ENCODE measurements at regions of chr19 and their contacts with region 1.

Region 1: GRCh38 chr19:7293795-7294570 is at the start of gene INSR:
- DNase-seq: peak; percentile 84
- ATAC-seq: peak; percentile 99
- H3K4me3 ChIP-seq: peak within 1 kb of the TSS; percentile 59
- H3K27ac ChIP-seq: peak within 1 kb of the TSS; percentile 49; the same call in 1 of the 2 replicates
- H3K4me1 ChIP-seq: peaks cover 3% of the 10 kb centered on the region; the same call in 1 of the 2 replicates
- H3K27me3 ChIP-seq: no peaks in the 10 kb centered on the region; the same call in 1 of the 2 replicates
- CTCF ChIP-seq: no peak
- POLR2A ChIP-seq: no peak
- RAD21 ChIP-seq: no peak
- total RNA-seq, gene INSR: 7.9 and 8.3 TPM in 2 replicates

Region 2: DNA sequence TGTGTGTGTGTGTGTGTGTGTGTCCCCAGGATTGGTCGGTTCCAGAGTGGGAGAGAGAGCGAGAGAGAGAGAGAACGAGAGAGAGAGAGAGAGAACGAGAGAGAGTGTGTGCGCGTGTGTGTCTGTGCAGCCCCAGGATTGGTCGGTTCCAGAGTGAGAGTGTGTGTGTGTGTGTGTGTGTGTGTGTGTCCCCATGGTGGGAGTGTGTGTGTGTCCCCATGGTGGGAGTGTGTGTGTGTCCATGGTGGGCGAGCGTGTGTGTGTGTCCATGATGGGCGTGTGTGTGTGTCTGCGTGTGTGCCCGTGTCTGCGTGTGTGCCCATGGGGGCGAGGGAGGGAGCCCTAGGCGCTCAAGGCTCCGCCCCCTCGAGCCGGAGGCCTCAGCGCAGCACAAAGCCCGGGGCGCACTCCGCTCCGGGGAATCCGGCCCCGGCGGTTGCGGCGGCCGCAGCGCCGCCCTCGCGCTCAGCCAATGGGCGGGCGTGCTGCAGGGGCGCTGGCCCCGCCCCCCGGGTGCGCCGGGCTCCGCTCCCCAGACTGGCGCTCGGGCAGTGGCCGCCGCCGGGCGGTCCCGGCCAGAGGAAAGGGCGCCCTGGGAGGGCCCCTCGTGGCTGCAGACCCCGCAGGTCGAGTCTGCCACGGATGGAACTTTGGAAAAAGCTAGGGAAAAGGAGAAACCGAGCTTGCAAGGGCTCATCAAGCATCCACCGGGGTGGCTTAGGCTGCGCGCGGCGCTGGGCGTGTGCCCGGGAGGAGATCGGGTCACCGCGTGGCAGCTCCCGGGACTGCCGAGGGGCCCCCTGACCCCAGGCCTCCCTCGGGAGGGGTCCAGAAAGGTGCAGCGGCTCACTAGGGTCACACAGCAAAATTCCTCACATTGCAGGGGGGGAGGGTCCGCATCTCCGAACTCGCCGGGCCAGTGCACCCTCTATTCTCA is 96.0 kb before region 1 on chr19:
- CTCF ChIA-PET with region 1: no interaction called
- POLR2A ChIA-PET with region 1: no interaction called
- dilution Hi-C with region 1: no loop called
- in situ Hi-C with region 1: loop called (anchors 5 kb)
- intact Hi-C with region 1: loop called (anchors 1 kb)
- DNase-seq: peak; percentile 94
- ATAC-seq: peak; percentile 94
- H3K4me3 ChIP-seq: peak overlapping the region; percentile 85
- H3K27ac ChIP-seq: peak overlapping the region; percentile 78
- H3K4me1 ChIP-seq: no peaks in the 10 kb centered on the region
- H3K27me3 ChIP-seq: no peaks in the 10 kb centered on the region
- CTCF ChIP-seq: 0 out of 2 replicates have a peak, but pooled peaks have one; percentile 0
- POLR2A ChIP-seq: peak; percentile 54; the same call in 1 of the 2 replicates
- RAD21 ChIP-seq: no peak

Region 3: DNA sequence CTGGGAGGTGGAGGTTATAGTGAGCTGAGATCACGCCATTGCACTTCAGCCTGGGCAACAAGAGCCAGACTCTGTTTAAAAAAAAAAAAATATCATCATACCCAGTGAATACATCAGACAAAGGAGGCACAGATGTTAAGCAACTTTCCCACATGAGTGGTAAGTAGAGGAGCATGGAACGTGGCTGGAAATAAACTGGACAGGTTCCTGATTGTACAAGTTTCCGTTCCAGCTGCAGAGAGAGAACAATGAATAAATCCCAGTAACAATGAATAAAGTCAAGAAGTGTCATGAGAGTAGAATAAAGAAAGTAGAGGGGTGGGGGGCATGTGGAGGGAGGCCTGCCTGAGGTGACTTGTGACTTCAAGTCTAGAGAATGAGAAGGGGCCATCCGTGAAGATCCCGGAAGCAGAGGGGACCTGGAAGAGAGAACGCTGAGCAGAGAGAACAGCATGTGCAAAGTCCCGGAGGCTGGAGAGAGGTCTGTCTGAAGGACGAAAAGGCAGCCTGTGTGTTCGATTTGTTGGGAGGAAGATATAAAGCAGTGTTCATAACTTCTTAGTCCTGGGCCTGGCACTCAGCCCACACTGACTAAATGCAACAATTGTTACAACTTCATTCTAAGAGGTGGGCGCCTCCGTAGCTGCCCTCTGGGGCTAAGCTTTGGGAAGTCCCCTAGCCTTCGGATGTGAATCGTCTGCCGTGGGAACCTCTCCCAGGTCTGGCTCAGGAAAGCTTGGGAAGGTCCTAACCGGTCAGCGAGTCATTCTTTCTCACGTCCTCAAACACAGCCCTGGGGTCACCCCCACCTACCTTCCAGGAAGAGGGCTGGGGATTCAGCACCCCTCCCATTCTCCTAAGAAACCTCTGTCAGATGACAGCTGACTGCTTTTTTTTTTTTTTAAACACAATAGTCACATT is 39.5 kb after region 1 on chr19:
- CTCF ChIA-PET with region 1: no interaction called
- POLR2A ChIA-PET with region 1: no interaction called
- dilution Hi-C with region 1: no loop called
- in situ Hi-C with region 1: no loop called
- intact Hi-C with region 1: no loop called
- DNase-seq: no peak
- ATAC-seq: no peak
- H3K4me3 ChIP-seq: no peak overlapping the region
- H3K27ac ChIP-seq: no peak overlapping the region
- H3K4me1 ChIP-seq: no peaks in the 10 kb centered on the region
- H3K27me3 ChIP-seq: peaks cover 3% of the 10 kb centered on the region; the same call in 1 of the 2 replicates
- CTCF ChIP-seq: no peak
- POLR2A ChIP-seq: no peak
- RAD21 ChIP-seq: no peak

Region 4: GRCh38 chr19:7386308-7386707 is 92.3 kb after region 1 on chr19:
- CTCF ChIA-PET with region 1: no interaction called
- POLR2A ChIA-PET with region 1: no interaction called
- dilution Hi-C with region 1: no loop called
- in situ Hi-C with region 1: no loop called
- intact Hi-C with region 1: no loop called
- DNase-seq: no peak
- ATAC-seq: no peak
- H3K4me3 ChIP-seq: no peak overlapping the region
- H3K27ac ChIP-seq: no peak overlapping the region
- H3K4me1 ChIP-seq: no peaks in the 10 kb centered on the region
- H3K27me3 ChIP-seq: no peaks in the 10 kb centered on the region
- CTCF ChIP-seq: no peak
- POLR2A ChIP-seq: no peak
- RAD21 ChIP-seq: no peak

Region 5: DNA sequence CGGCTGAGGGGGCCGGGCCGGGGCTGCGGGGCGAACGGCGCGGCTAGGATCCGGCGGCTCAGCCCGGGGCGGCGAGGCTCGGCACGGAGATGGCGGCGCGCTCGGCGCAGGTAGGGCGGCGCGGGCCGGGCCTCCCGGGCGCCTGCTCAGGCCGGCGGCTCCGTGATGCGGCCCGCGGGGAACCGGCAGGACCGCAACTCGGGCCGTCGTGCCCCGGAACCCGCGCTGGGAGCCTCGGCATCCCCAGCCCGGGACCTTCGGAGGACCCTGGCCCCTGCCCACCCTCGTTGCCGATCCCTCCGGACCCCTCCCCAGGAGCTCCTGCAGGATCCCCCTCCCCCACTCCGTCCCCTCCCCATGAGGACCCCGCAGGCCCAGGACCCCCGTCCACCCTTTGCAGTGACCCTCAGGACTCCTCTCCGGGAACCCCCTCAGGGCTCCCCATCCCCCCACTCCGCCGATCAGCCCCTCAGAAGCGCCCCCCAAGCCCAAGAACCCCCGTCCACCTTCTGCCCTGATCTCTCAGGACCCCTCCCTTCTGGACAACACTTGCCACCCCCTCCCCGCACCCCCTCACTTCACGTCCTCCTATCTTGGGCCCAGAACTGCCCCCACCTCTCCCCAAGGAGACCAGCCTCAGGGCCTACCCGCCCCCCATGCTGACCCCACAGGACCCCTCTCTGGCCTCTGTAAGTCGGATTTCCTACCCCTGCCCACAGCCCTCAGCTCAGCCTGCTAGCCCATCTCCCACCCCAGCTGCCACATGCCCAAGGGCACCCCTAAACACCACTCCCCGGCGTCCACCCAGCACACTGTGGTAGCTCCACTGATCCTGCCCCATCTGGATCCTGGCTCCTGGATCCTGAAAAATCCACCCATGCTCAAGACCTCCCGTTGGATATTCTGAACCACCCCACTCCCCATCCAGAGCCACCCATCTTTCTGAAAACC is 536.6 kb after region 1 on chr19:
- CTCF ChIA-PET with region 1: no interaction called
- POLR2A ChIA-PET with region 1: interaction called, 14 read pairs
- dilution Hi-C with region 1: no loop called
- in situ Hi-C with region 1: no loop called
- intact Hi-C with region 1: no loop called
- DNase-seq: no peak
- ATAC-seq: peak; percentile 6
- H3K4me3 ChIP-seq: peak overlapping the region; percentile 63
- H3K27ac ChIP-seq: peak overlapping the region; percentile 5; the same call in 1 of the 2 replicates
- H3K4me1 ChIP-seq: peaks cover 14% of the 10 kb centered on the region; the same call in 1 of the 2 replicates
- H3K27me3 ChIP-seq: 0 out of 2 replicates have a peak, but pooled peaks cover 2% of the 10 kb centered on the region
- CTCF ChIP-seq: no peak
- POLR2A ChIP-seq: no peak
- RAD21 ChIP-seq: no peak